Activated naive CD4-positive, alpha-beta T cell treated with anti-CD3 and anti-CD28 coated beads for 36 hours (primary cell): ENCODE measurements at regions of chr13 and their contacts with region 1.

Region 1: DNA sequence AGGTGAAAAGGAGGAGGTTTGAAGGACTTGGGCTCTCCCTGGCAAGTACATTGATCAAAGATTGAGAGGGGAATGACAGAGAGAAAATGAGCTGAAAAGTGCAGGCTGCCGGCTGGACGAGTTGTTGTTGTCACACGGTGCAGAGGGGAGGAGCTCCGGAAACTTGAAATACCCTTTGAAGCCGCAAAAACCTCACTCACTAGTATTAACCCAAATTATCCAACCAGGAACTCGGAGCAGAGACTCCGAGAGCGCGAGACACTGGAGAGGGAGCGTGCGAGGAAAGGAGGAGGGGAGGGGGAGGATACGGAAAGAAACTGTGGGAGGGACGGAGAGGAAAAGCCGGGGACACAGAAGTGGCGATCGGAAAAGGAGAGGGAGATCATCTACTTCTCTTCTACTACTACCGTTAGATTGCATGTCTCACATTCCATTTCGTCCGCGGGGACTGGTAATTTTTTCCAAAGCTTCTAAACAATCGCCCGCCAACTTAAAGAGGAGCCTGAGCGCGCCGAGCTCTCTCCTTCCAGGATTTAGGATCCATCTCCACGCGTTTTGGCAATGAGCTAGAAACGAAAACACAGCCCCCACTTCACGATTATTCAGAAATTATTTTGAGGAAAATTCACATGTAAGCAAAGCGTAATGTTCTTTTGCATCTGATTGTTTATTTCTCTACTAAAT is at the start of gene DACH1:
- DNase-seq: peak; percentile 34
- H3K4me3 Mint-ChIP-seq: peak within 1 kb of the TSS; percentile 74
- H3K27ac Mint-ChIP-seq: no peak within 1 kb of the TSS
- H3K4me1 Mint-ChIP-seq: peaks cover 21% of the 10 kb centered on the region
- H3K27me3 Mint-ChIP-seq: peaks cover 62% of the 10 kb centered on the region
- total RNA-seq, gene DACH1: not detected

Region 2: GRCh38 chr13:71610876-71611275 is 256.4 kb before region 1 on chr13:
- CTCF ChIA-PET with region 1: no interaction called
- intact Hi-C with region 1: loop called (anchors 5 kb)
- DNase-seq: peak; percentile 8
- H3K4me3 Mint-ChIP-seq: peak overlapping the region; percentile 51
- H3K27ac Mint-ChIP-seq: no peak overlapping the region
- H3K4me1 Mint-ChIP-seq: peaks cover 5% of the 10 kb centered on the region
- H3K27me3 Mint-ChIP-seq: no peaks in the 10 kb centered on the region

Region 3: DNA sequence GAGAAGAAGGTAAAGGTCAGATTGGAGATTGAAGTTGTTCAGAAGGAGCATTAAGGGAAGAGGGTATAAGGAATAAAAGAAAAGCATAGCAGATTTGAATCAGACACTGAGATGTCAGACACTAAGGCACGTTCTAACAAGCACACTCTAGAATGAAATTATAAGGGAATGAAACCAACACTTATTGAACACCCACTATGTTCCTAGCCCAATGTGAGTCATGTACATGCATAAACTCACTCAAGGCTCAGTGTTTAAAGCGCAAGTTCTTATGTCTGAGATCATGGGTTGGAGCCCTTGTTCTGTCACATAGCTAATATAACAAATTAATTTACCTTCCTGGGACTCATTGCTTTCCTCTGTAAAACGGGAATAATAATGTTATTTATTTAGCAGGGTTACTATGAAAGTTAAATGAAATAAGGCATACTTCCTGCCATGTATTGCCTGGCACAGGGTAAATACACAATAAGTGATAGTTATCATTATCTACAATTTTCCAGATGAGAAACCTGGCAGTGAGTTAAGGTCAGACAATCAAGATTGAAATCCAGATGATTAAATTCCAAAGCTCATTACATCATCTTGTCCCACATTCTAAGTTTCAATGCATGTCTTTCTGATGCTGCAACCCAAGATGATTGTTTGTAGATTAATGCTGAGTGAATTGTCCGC is 68.0 kb after region 1 on chr13:
- CTCF ChIA-PET with region 1: no interaction called
- intact Hi-C with region 1: no loop called
- DNase-seq: no peak
- H3K4me3 Mint-ChIP-seq: no peak overlapping the region
- H3K27ac Mint-ChIP-seq: no peak overlapping the region
- H3K4me1 Mint-ChIP-seq: no peaks in the 10 kb centered on the region
- H3K27me3 Mint-ChIP-seq: no peaks in the 10 kb centered on the region